ENCODE measurements at regions of chr11 and their contacts with region 1.

Region 1: GRCh38 chr11:69296890-69297786 is 3.2 kb downstream of the MYEOV start:
- DNase-seq: peak; percentile 93
- H3K4me3 ChIP-seq: no peak overlapping the region
- H3K27ac ChIP-seq: peak overlapping the region; percentile 92
- H3K4me1 ChIP-seq: peaks cover 36% of the 10 kb centered on the region
- H3K27me3 ChIP-seq: no peaks in the 10 kb centered on the region
- CTCF ChIP-seq: no peak

Region 2: GRCh38 chr11:69257838-69258658 is 39.1 kb before region 1 on chr11:
- intact Hi-C with region 1: no loop called
- DNase-seq: no peak
- H3K4me3 ChIP-seq: no peak overlapping the region
- H3K27ac ChIP-seq: no peak overlapping the region
- H3K4me1 ChIP-seq: no peaks in the 10 kb centered on the region
- H3K27me3 ChIP-seq: no peaks in the 10 kb centered on the region
- CTCF ChIP-seq: no peak

Region 3: DNA sequence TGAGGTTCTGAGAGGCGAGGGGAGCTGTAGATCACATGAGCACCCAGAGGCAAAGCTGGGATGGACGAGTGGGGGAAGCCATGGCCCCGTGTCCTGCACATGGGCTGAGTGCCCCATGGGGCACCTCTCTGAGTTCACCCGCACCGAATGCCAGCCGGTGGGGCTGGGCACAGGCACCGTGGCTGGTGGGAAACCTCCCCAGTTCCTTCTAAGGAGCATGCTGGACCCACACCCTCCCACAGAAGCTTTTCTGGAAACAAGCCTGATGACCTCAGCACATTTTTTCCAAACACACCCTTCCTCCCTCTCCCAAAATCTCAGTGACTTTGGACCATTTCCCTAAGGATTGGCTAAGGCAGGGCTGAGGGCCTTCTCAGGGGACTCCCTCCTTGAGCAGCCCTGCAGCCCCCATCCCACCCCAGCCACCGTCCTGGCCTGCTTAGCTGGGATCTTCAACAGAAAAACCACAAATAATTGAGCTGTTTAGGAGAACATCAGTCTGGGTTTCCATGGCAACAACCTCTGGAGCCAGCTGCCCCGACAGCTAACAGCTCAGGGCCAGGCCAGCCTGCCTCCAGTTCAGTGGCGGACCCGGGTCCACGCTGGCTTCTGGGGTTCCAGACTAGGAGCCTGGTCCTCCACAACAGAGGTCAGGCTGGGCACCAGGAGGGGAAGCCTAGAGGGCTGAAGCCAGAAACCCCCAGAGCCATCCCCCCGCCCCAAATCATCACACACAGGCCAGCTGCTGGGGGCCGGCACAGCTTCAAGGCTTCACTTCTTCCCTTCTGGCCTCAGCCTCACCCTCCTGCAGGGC is 166.2 kb after region 1 on chr11:
- intact Hi-C with region 1: loop called (anchors 10 kb)
- DNase-seq: no peak
- H3K4me3 ChIP-seq: no peak overlapping the region
- H3K27ac ChIP-seq: peak overlapping the region; percentile 49
- H3K4me1 ChIP-seq: peaks cover 7% of the 10 kb centered on the region
- H3K27me3 ChIP-seq: no peaks in the 10 kb centered on the region
- CTCF ChIP-seq: no peak

Measured in colonic mucosa (tissue), 4 donors.